Mucosa of descending colon (tissue), 3 donors: ENCODE measurements at regions of chr11 and their contacts with region 1.

Region 1: DNA sequence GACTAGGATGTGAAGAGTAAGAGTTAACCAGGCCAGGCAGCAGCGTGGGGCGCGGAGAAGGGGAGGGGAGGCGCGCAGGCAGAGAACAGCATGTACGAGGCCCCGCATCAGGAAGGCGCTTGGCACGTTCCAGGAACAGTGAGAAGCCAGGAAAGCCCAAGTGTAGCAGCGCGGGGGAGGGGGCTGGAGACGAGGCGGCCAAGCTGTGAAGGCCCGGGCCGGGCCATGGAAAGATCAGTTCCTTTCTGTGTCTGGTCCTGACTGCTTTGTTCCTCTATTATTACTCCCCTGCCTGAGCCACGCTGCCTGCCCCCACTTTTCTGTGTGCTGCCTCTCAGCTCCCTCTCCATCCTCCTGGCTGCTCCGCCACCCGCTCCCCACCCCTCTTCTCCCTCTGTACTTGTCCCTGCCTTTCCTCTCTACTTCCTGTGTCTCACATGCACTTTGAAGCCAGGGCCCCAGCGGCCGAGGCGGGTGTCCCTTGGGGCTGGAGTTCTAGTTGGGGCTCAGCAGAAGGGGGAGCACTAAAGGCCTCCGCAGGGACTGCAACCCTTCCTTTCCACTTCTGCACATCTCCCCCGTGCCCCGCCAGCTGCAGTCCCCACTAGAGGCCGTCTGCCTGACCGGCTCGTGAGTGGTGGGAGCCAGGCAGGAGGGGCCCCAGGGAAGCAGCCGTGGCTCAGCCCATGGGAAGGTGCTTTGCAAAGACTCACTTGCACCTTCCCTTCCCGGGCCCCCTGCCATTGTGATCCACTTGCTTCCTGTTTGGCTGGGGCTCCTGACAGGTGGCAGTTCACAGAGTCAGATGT is 63.7 kb downstream of the PRDM11 start:
- DNase-seq: peak in 2 of 3 donors; percentile 34 to 52
- ATAC-seq: peak; percentile 38
- H3K4me3 ChIP-seq: no peak overlapping the region
- H3K4me1 ChIP-seq: peaks cover 13% of the 10 kb centered on the region
- CTCF ChIP-seq: no peak

Region 2: GRCh38 chr11:44989831-44990566 is 220.1 kb before region 1 on chr11:
- intact Hi-C with region 1: no loop called
- DNase-seq: no peak
- ATAC-seq: no peak
- H3K4me3 ChIP-seq: no peak overlapping the region
- H3K4me1 ChIP-seq: no peaks in the 10 kb centered on the region
- CTCF ChIP-seq: no peak

Region 3: DNA sequence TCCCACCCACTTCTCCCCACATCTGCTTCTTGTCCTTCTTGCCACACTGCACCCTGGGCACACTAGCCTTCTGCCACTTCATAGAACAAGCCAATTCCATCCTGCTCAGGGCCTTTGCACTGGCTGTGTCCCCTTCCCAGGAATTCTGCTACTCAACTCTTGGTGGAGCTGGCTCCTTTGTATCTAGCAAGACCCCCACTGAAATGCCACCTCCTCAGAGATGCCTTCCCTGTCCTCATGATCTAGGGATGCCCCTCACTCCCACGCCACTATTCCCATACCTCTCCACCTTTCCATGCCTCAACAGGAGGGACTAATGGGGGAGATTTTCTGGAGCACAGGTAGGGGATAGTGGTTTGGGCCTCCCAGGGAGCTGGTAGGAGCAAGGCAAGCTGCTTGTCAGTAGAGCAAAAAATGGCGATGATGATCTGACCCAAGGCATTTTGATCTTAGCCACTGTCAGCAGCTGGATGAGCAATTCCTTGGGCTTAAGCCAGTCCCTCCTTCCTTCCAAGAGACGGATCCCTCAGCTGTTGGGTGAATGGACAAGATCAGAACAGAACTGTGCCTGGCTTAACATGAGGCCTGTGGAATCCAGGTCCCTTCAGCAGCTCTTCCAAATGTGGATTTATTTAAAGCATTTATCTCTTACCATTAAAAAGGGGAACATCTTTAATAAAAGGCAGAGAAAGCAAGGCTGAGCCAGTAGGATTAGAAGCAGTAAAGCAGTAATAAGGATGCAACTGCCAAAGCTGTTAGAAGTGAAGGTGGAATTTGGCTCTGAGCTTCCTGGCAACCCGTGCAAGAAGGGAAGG is 67.6 kb before region 1 on chr11:
- intact Hi-C with region 1: loop called in 1 of 2 experiments (anchors 5 kb)
- DNase-seq: no peak
- ATAC-seq: no peak
- H3K4me3 ChIP-seq: no peak overlapping the region
- H3K4me1 ChIP-seq: peaks cover 11% of the 10 kb centered on the region
- CTCF ChIP-seq: no peak